CD8-positive, alpha-beta T cell (primary cell): ENCODE measurements at regions of chr19 and their contacts with region 1.

Region 1: DNA sequence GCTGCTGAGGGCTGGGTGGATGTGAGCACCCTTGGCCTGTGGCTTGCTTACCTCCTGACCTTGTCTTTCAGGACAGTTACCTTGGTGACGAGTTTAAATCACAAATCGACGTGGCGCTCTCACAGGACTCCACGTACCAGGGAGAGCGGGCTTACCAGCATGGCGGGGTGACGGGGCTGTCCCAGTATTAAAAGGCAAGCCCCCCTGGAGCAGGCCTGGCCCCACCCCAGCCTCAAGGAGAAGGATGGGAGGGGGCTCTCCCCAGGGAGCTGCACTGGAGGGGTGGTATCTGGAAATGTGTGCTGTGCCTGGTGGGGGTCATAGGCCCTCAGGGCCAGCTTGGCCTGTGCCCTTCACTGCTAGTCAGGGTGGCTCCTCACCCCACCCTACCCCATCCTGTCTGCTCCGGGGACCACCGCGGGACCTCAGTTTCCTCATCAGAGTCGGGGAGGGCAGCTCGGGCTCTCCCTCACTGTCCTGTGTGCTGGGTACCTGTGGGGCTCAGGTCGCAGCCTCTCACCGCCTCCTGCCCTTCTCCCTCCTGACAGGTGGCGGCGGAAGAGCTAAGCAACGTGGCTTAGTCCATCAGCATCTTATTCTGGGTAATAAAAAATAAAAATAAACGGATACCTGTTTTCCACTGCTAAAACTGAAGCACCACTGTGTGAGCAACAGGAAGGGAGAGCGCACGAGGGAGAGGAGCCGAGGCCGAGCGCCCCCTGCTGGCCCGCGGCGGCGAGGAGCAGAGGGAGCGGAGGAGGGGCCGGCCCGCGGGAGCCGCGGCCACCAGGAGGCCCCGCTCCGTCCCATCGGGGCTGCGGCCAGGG is 29.8 kb downstream of the CERS1 start:
- DNase-seq: peak in 8 of 9 experiments; percentile 40 to 75 (median 62)
- ATAC-seq: peak; percentile 80
- H3K4me3 ChIP-seq: no peak overlapping the region
- H3K4me3 Mint-ChIP-seq: no peak overlapping the region
- H3K27ac ChIP-seq: no peak overlapping the region
- H3K27ac Mint-ChIP-seq: no peak overlapping the region
- H3K4me1 ChIP-seq: peaks cover 4% of the 10 kb centered on the region
- H3K4me1 Mint-ChIP-seq: peaks cover 5% of the 10 kb centered on the region
- H3K27me3 ChIP-seq: peaks cover 0 to 4% of the 10 kb centered on the region in 2 experiments
- H3K27me3 Mint-ChIP-seq: peaks cover 3% of the 10 kb centered on the region
- CTCF ChIP-seq: peak; percentile 87

Region 2: DNA sequence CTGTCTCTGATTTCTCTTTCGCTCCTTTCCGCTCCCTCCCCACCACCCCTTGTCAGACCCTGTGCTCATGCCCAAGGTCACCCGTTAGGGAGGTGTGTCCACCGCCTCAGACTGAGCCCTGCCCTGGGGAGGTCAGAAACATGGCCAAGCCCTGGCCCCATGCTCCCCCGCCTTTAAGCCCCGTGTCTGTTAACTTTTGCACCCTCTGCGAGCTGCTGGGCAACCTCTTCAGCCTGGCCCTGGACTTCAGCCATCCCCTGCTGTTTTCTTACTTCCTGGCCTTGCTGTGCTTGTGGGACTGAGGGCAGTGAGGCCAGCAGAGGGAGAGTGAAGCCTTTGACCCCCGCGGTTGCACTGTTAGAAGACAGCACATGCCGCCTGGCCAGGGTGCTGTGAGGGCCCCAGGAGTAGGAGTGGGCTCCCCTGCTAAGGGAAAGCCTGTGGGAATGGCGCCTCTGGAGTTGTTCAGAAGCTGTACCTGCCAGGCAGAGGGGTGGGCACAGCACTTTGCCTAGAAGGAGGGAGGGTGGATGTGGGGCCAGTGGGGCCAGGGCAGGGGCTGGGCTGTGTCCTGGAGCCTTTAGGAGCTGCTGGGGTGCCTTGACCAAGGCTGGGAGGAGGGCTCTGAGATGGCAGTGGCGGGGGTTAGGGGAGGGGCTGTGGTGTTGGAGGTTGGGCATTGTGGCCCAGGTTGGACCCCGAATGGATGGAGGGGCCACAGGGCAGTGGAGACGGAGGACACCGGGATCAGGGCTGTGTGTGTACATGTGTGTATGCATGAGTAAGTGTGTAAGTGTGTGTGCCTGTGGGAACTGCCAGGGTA is 26.5 kb before region 1 on chr19:
- CTCF ChIA-PET with region 1: interaction called, 10 read pairs
- POLR2A ChIA-PET with region 1: no interaction called
- intact Hi-C with region 1: no loop called
- DNase-seq: no peak
- ATAC-seq: no peak
- H3K4me3 ChIP-seq: no peak overlapping the region
- H3K4me3 Mint-ChIP-seq: no peak overlapping the region
- H3K27ac ChIP-seq: no peak overlapping the region
- H3K27ac Mint-ChIP-seq: peak overlapping the region; percentile 76
- H3K4me1 ChIP-seq: peaks cover 89% of the 10 kb centered on the region
- H3K4me1 Mint-ChIP-seq: peaks cover 85% of the 10 kb centered on the region
- H3K27me3 ChIP-seq: no peaks in the 10 kb centered on the region
- H3K27me3 Mint-ChIP-seq: no peaks in the 10 kb centered on the region
- CTCF ChIP-seq: no peak

Region 3: DNA sequence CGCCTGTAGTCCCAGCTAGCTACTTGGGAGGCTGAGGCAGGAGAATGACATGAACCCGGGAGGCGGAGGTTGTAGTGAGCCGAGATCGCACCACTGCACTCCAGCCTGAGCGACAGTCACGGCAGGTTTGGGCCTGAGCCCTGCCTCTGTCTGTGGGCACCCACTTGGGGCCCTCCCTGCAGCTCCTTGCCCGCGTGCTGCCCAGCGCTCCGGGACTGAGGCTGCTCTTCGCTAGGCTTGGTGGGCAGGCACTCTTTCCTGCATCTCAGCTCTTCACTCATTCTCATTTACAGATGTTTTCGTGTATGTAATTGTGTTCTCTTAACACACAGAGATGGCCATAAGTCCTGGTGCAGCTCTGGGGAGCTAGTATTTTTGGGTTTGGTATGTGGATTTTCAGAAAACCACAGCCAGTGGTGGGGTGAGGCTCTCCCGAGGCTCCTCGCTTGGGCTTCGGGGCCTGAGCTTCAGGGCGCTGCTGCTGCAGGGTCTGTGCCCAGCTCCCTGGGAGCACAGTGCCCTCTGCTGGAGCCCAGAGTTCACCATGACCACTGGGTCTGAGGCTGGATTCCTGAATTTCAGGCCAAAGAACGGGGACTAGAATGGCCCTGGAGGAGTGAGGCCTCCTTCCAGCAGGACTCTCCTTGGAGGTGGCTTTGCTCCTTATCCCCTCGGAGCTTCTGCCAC is 19.2 kb before region 1 on chr19:
- CTCF ChIA-PET with region 1: interaction called, 21 read pairs
- POLR2A ChIA-PET with region 1: no interaction called
- intact Hi-C with region 1: no loop called
- DNase-seq: peak; percentile 37 to 81 (median 73)
- ATAC-seq: peak; percentile 65
- H3K4me3 ChIP-seq: no peak overlapping the region
- H3K4me3 Mint-ChIP-seq: peak overlapping the region; percentile 36
- H3K27ac ChIP-seq: no peak overlapping the region
- H3K27ac Mint-ChIP-seq: no peak overlapping the region
- H3K4me1 ChIP-seq: peaks cover 40% of the 10 kb centered on the region
- H3K4me1 Mint-ChIP-seq: peaks cover 56% of the 10 kb centered on the region
- H3K27me3 ChIP-seq: no peaks in the 10 kb centered on the region
- H3K27me3 Mint-ChIP-seq: no peaks in the 10 kb centered on the region
- CTCF ChIP-seq: peak; percentile 78